ENCODE measurements at regions of chr3 and their contacts with region 1.

Region 1: DNA sequence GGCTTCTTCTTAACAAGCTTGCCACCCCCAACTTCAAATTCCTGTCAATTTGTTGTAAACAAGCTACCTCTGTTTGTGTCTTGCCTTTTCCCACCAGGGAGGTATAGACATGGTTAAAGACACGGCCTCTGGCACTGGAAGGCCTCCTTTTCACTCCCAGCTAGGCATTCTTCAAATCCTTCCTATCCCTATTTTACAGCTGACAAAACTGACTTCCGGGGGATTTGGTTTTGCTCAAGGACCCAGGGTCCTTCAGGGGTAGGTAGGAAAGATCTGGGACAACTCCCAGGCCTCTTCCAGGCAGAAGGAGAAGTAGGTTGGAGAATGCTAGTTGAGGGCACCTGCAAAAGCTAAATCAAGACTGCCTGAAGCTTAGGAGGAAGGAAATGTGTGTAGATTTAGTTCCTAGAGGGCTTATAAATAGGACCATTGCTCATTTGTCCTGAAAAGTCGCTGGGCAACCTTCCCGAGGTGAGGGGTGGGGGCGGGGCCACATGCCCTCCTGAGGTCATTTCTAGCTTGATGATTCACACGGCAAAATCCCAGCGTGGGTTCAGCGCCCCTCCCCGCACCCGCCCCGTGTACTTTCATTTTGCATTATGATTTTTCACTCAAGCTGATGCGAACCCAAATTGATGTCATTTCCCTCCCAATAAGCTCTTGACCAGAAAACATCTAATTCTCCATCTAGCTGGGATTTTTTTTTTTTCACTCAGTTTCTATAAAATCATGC is 365.5 kb downstream of the SHQ1 start:
- DNase-seq: peak; percentile 78 to 88
- ATAC-seq: peak; percentile 91 to 97 (median 94)
- H3K4me3 ChIP-seq: peak overlapping the region; percentile 54
- H3K27ac ChIP-seq: peak overlapping the region; percentile 76
- H3K4me1 ChIP-seq: peaks cover 26% of the 10 kb centered on the region
- H3K27me3 ChIP-seq: no peaks in the 10 kb centered on the region
- CTCF ChIP-seq: no peak

Region 2: GRCh38 chr3:72447059-72447946 is 35.5 kb before region 1 on chr3:
- intact Hi-C with region 1: loop called in 1 of 2 experiments (anchors 5 kb)
- DNase-seq: peak; percentile 94 to 97
- ATAC-seq: peak; percentile 96 to 99 (median 98)
- H3K4me3 ChIP-seq: peak overlapping the region; percentile 85
- H3K27ac ChIP-seq: peak overlapping the region; percentile 85
- H3K4me1 ChIP-seq: peaks cover 24% of the 10 kb centered on the region
- H3K27me3 ChIP-seq: no peaks in the 10 kb centered on the region
- CTCF ChIP-seq: no peak